ENCODE measurements at regions of chr2 and their contacts with region 1.

Region 1: GRCh38 chr2:105787376-105788318 is 42.9 kb downstream of the NCK2 start:
- DNase-seq: no peak
- H3K4me3 Mint-ChIP-seq: no peak overlapping the region
- H3K27ac Mint-ChIP-seq: peak overlapping the region; percentile 90
- H3K4me1 Mint-ChIP-seq: peaks cover 98% of the 10 kb centered on the region
- H3K27me3 Mint-ChIP-seq: no peaks in the 10 kb centered on the region

Region 2: DNA sequence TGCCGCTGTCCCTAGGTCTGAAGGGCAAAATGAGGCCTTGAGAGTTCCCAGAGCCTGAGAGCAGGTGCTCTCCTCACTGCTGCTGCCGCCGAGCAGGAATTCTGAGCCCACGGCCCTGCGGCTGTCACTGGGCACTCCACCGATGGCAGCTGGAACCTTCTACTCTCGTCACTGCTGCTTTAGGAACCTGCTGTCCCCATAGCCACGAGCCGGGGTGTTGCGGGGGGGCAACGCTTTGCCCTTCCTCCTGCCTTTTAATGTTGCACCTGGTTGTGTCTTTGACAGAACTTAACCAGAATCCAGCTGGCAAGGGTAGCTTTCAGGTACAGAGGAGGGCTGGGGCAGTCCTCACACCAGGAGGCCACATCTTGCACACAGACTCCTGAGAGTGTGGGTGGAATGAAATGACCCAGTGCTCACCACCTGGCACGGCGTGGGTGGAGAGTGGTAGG is 10.6 kb before region 1 on chr2:
- CTCF ChIA-PET with region 1: interaction called, 12 read pairs
- POLR2A ChIA-PET with region 1: no interaction called
- DNase-seq: no peak
- H3K4me3 Mint-ChIP-seq: peak overlapping the region; percentile 58
- H3K27ac Mint-ChIP-seq: peak overlapping the region; percentile 83
- H3K4me1 Mint-ChIP-seq: peaks cover 94% of the 10 kb centered on the region
- H3K27me3 Mint-ChIP-seq: no peaks in the 10 kb centered on the region

Region 3: GRCh38 chr2:105804266-105804665 is 16.6 kb after region 1 on chr2:
- CTCF ChIA-PET with region 1: interaction called, 11 read pairs
- POLR2A ChIA-PET with region 1: no interaction called
- DNase-seq: no peak
- H3K4me3 Mint-ChIP-seq: no peak overlapping the region
- H3K27ac Mint-ChIP-seq: peak overlapping the region; percentile 75
- H3K4me1 Mint-ChIP-seq: peaks cover 90% of the 10 kb centered on the region
- H3K27me3 Mint-ChIP-seq: no peaks in the 10 kb centered on the region

Region 4: DNA sequence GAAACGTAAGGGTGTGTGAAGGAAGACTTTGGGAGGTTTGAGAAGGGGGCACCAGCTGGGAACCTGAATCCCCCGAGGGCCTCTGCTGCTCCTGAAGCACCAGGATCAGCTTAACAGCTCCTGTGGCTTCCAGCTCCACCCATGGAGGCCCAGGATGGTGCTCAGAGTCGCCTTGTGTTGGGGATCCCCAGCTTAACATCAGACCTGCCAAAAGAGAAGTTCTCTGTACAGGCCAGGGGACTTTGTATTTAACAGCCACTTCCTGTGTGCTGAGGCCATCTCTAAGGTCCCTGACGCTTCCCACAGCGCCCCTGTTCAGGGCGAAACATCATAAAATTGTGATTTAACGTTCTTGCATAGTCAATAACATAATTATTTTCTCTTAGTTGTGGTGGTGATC is 34.5 kb after region 1 on chr2:
- CTCF ChIA-PET with region 1: no interaction called
- POLR2A ChIA-PET with region 1: no interaction called
- DNase-seq: no peak
- H3K4me3 Mint-ChIP-seq: no peak overlapping the region
- H3K27ac Mint-ChIP-seq: peak overlapping the region; percentile 74
- H3K4me1 Mint-ChIP-seq: peaks cover 70% of the 10 kb centered on the region
- H3K27me3 Mint-ChIP-seq: no peaks in the 10 kb centered on the region

Region 5: DNA sequence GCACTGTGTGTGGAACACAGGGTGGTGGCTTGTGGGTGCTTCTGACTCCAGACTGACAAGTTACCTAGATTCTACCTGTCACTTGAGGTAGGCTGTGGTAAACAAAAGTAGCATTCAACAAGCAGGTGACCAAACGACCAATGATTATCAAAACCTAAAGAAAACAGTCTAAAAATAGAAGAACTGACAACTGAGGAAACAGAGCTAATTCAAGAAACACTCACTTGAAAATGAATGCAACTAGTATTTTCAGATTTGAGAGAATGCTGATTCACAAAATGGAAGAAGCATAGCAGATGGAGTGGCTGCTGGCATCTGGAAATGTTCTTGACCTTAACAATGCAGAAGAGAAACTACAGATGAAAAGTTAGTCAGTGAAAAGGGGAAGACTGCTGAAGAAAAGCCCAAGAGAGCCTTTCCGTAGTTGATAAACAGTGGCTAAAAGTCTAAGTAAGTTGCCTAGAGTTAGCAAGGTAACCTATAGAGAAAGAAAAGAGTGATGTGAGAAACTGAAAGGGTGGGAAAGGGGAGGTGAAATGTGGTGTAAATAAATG is 127.4 kb after region 1 on chr2:
- CTCF ChIA-PET with region 1: no interaction called
- POLR2A ChIA-PET with region 1: no interaction called
- DNase-seq: no peak
- H3K4me3 Mint-ChIP-seq: no peak overlapping the region
- H3K27ac Mint-ChIP-seq: no peak overlapping the region
- H3K4me1 Mint-ChIP-seq: peaks cover 8% of the 10 kb centered on the region
- H3K27me3 Mint-ChIP-seq: no peaks in the 10 kb centered on the region

Measured in activated CD4-positive, alpha-beta T cell treated with anti-CD3 and anti-CD28 coated beads, Interleukin-2, amount 10 ng/mL, durations not matched to agents 7 days and 5 days (primary cell).